ENCODE measurements at regions of chr18 and their contacts with region 1.

Region 1: DNA sequence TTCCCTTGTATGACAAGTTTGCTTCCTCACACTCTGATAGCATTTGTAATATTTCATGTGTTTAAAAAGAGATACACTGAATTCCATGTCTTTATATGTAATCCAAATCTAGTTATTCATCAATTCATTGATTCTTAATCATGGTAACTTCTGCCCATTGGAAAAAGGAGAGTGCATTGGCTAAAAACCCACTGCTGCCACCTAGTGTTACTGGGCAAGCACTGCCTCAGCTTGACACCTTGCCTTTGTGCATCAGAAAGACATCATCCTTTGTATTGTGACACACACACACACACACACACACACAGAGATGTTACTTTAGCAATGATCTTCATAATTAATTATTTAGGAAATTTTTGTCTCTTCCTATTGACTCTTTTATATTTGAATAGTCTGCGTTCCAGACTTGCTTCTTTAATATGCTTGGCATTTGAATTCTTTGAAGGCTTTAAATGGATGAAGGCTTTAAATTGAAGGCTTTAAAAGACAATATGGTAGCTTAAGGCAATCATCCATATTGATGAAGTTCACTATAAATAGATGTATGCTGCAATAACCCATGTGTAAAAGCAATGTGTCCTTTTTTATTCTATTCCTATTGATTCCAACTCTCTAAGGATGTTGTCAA is 414.2 kb upstream of the CHST9 start:
- DNase-seq: peak; percentile 52
- H3K4me3 ChIP-seq: no peak overlapping the region
- H3K27ac ChIP-seq: no peak overlapping the region
- H3K4me1 ChIP-seq: no peaks in the 10 kb centered on the region
- H3K27me3 ChIP-seq: no peaks in the 10 kb centered on the region
- CTCF ChIP-seq: peak; percentile 76

Region 2: DNA sequence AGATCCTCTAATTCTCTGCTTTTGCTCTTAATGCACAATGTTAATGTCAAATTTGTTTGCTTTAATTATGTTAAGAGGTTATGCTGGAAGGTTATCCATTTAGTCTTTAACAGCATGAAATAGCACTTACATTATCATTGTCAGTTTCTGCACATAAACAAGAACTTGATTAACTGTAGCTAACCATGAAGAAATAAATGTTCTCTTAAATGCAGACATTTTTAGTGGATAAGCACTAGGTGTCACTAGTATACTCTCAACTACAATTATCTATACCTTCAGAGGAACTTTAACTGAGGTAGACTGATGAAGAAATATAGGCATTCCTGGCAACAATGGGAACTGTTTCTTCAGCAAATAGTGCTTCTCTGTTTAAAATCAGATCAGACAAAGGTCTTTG is 235.4 kb before region 1 on chr18:
- intact Hi-C with region 1: loop called (anchors 5 kb)
- DNase-seq: no peak
- H3K4me3 ChIP-seq: no peak overlapping the region
- H3K27ac ChIP-seq: no peak overlapping the region
- H3K4me1 ChIP-seq: no peaks in the 10 kb centered on the region
- H3K27me3 ChIP-seq: no peaks in the 10 kb centered on the region
- CTCF ChIP-seq: no peak

Region 3: DNA sequence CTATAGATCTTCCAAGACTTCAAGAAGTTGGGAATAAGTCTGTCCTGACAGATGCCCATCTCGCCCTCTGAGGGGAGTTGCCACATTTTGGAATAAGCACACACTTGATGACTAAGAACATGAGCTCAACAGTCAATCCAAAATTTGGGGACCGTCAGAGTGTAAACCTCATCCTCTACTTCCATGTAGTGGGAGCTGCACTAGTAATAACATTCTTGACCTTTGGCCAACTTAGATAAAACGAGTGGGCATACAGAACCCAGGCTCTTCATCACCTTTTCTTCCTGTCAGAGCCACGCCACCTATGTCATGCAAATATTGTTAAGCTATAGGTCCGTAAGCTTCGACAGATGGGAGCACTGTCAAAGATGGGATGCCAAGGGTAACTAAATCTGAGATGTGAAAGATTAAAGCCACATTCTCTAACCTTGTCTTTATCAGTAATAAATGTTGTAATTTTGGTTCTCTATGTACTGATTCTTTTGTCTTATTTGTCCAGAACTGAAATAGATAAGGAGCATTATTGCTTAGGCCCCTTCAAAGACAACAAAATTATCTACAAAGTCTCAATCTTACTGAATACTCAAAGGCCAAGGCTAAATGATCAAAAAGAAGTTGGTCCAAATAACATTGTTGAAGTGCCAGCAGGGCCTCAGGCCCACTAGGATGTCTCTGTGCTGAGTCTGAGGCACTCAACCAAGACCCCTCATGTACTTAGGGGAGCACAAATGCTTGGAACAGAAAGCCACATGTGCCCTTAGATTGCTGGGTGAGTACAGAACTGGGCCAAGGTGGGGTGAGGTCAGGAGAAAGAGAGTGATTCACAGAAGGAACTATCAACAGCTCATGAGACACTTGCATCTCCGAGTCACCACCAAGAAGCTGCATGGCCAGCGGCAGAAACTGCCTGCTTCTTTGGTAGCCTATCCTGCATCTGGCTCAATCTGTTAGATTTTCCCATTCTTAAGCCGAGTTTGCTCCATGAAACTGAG is 562.6 kb after region 1 on chr18:
- intact Hi-C with region 1: no loop called
- DNase-seq: no peak
- H3K4me3 ChIP-seq: no peak overlapping the region
- H3K27ac ChIP-seq: no peak overlapping the region
- H3K4me1 ChIP-seq: no peaks in the 10 kb centered on the region
- H3K27me3 ChIP-seq: no peaks in the 10 kb centered on the region
- CTCF ChIP-seq: no peak

Measured in colonic mucosa (tissue), 4 donors.